ENCODE measurements at regions of chr19 and their contacts with region 1.

Region 1: GRCh38 chr19:37906869-37907734 is at the start of gene SIPA1L3:
- DNase-seq: peak; percentile 97
- H3K4me3 ChIP-seq: peak within 1 kb of the TSS; percentile 40 to 99 (median 83)
- H3K27ac ChIP-seq: peak within 1 kb of the TSS; percentile 50
- H3K4me1 ChIP-seq: peaks cover 15% of the 10 kb centered on the region
- H3K27me3 ChIP-seq: no peaks in the 10 kb centered on the region
- CTCF ChIP-seq: no peak
- POLR2A ChIP-seq: peak; percentile 82
- total RNA-seq, gene SIPA1L3: 44.4 and 47.2 TPM in 2 replicates

Region 2: DNA sequence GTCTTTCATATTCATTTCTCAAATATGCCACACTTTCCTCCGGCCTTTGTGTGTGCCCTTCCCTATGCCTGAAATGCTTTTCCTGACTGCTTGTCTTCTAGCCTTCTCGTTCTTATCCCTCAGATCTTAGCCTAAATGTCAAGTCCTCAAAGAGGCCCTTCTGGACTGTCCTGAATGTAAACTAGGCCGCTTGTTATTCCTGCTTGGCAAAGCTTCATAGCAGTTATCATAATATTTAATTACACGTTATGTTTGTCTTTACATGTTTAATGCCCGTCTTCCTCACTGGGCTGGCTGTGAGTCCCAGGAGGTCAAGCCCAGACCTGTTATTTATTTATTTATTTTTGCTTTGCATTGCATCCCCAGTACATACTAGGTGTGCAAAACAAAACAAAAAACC is 62.6 kb after region 1 on chr19:
- CTCF ChIA-PET with region 1: interaction called, 10 read pairs
- POLR2A ChIA-PET with region 1: no interaction called
- dilution Hi-C with region 1: no loop called
- intact Hi-C with region 1: no loop called
- DNase-seq: no peak
- H3K4me3 ChIP-seq: no peak overlapping the region
- H3K27ac ChIP-seq: no peak overlapping the region
- H3K4me1 ChIP-seq: no peaks in the 10 kb centered on the region
- H3K27me3 ChIP-seq: no peaks in the 10 kb centered on the region
- CTCF ChIP-seq: no peak
- POLR2A ChIP-seq: no peak

Region 3: GRCh38 chr19:38022791-38023670 is 115.9 kb after region 1 on chr19:
- CTCF ChIA-PET with region 1: interaction called, 15 read pairs
- POLR2A ChIA-PET with region 1: no interaction called
- dilution Hi-C with region 1: no loop called
- intact Hi-C with region 1: no loop called
- DNase-seq: peak; percentile 80
- H3K4me3 ChIP-seq: no peak overlapping the region
- H3K27ac ChIP-seq: peak overlapping the region; percentile 92
- H3K4me1 ChIP-seq: peaks cover 52% of the 10 kb centered on the region
- H3K27me3 ChIP-seq: no peaks in the 10 kb centered on the region
- CTCF ChIP-seq: no peak
- POLR2A ChIP-seq: no peak

Region 4: GRCh38 chr19:38079926-38080380 is 172.9 kb after region 1 on chr19:
- CTCF ChIA-PET with region 1: interaction called, 22 read pairs
- POLR2A ChIA-PET with region 1: no interaction called
- dilution Hi-C with region 1: no loop called
- intact Hi-C with region 1: no loop called
- DNase-seq: peak; percentile 81
- H3K4me3 ChIP-seq: no peak overlapping the region
- H3K27ac ChIP-seq: peak overlapping the region; percentile 31
- H3K4me1 ChIP-seq: peaks cover 14% of the 10 kb centered on the region
- H3K27me3 ChIP-seq: no peaks in the 10 kb centered on the region
- CTCF ChIP-seq: no peak
- POLR2A ChIP-seq: no peak

Region 5: GRCh38 chr19:38134540-38135149 is 227.5 kb after region 1 on chr19:
- CTCF ChIA-PET with region 1: interaction called, 26 read pairs
- POLR2A ChIA-PET with region 1: no interaction called
- dilution Hi-C with region 1: no loop called
- intact Hi-C with region 1: no loop called
- DNase-seq: peak; percentile 28
- H3K4me3 ChIP-seq: no peak overlapping the region
- H3K27ac ChIP-seq: no peak overlapping the region
- H3K4me1 ChIP-seq: no peaks in the 10 kb centered on the region
- H3K27me3 ChIP-seq: no peaks in the 10 kb centered on the region
- CTCF ChIP-seq: peak; percentile 67 to 69
- POLR2A ChIP-seq: no peak

Region 6: DNA sequence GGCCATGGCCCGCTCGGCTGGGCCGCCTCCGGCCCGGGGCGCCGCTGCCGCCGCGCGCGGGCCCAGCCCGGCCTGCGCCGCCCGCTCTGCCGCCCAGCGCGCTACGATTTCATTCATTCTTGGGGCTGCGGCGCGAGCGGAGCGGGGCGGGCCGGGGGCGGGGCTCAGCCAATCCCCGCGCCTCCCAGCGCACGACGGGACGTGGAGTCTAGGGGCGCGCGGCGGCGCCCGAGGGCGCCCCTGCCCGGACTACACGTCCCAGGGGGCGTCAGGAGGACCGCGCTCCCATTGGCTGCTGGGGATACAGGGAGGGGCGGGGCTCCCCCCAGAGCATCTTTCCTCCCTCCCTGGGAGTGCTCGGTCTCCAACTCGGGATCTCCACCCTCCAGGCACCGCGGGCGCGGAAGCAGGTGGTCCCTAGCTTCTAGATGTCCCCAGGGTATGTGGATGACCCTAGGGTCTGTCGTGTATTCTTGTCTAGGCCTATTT is 322.5 kb after region 1 on chr19:
- CTCF ChIA-PET with region 1: interaction called, 28 read pairs
- POLR2A ChIA-PET with region 1: no interaction called
- dilution Hi-C with region 1: no loop called
- intact Hi-C with region 1: no loop called
- DNase-seq: peak; percentile 77
- H3K4me3 ChIP-seq: peak overlapping the region in 1 of 3 experiments; percentile 14
- H3K27ac ChIP-seq: no peak overlapping the region
- H3K4me1 ChIP-seq: peaks cover 8% of the 10 kb centered on the region
- H3K27me3 ChIP-seq: peaks cover 9 to 14% of the 10 kb centered on the region in 2 experiments
- CTCF ChIP-seq: peak in 1 of 2 donors; percentile 13
- POLR2A ChIP-seq: no peak